Psoas muscle (tissue), 8 donors: ENCODE measurements at regions of chr4 and their contacts with region 1.

Region 1: GRCh38 chr4:184838249-184839074 is 12.7 kb upstream of the ACSL1 start:
- DNase-seq: no peak
- ATAC-seq: no peak
- H3K4me3 ChIP-seq: no peak overlapping the region
- H3K27ac ChIP-seq: no peak overlapping the region
- H3K4me1 ChIP-seq: no peaks in the 10 kb centered on the region
- H3K27me3 ChIP-seq: no peaks in the 10 kb centered on the region
- CTCF ChIP-seq: no peak

Region 2: GRCh38 chr4:184805462-184806228 is 32.8 kb before region 1 on chr4:
- intact Hi-C with region 1: no loop called
- DNase-seq: peak; percentile 88 to 97
- ATAC-seq: peak; percentile 81 to 89 (median 85)
- H3K4me3 ChIP-seq: peak overlapping the region; percentile 71
- H3K27ac ChIP-seq: peak overlapping the region; percentile 92
- H3K4me1 ChIP-seq: peaks cover 78% of the 10 kb centered on the region
- H3K27me3 ChIP-seq: no peaks in the 10 kb centered on the region
- CTCF ChIP-seq: no peak

Region 3: DNA sequence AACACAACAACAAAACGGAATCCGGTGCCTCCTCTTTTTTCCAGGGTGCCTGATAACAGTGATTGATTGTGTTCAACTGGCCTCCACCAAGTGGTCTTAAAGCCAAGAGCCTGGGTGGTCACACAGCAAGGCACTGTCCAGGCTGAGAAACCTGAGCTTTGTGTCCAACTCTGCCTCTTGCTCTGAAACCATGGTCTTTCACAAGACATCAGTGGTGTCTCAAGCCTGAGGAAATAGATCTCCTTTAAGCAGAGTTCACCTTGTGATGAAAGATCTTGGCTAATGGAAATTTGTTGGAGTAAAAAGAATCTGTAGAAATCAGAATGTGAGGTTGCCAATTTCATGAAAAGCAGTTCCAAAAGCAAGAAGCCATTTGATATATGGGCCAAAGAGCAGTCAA is 34.6 kb after region 1 on chr4:
- intact Hi-C with region 1: no loop called
- DNase-seq: no peak
- ATAC-seq: no peak
- H3K4me3 ChIP-seq: no peak overlapping the region
- H3K27ac ChIP-seq: no peak overlapping the region
- H3K4me1 ChIP-seq: no peaks in the 10 kb centered on the region
- H3K27me3 ChIP-seq: no peaks in the 10 kb centered on the region
- CTCF ChIP-seq: no peak

Region 4: GRCh38 chr4:184884883-184885282 is 46.4 kb after region 1 on chr4:
- intact Hi-C with region 1: no loop called
- DNase-seq: no peak
- ATAC-seq: no peak
- H3K4me3 ChIP-seq: no peak overlapping the region
- H3K27ac ChIP-seq: no peak overlapping the region
- H3K4me1 ChIP-seq: no peaks in the 10 kb centered on the region
- H3K27me3 ChIP-seq: no peaks in the 10 kb centered on the region
- CTCF ChIP-seq: no peak

Region 5: GRCh38 chr4:184955651-184956050 is 117.2 kb after region 1 on chr4:
- intact Hi-C with region 1: loop called in 1 of 2 experiments (anchors 10 kb)
- DNase-seq: no peak
- ATAC-seq: no peak
- H3K4me3 ChIP-seq: no peak overlapping the region
- H3K27ac ChIP-seq: no peak overlapping the region
- H3K4me1 ChIP-seq: peaks cover 8% of the 10 kb centered on the region
- H3K27me3 ChIP-seq: no peaks in the 10 kb centered on the region
- CTCF ChIP-seq: no peak

Region 6: GRCh38 chr4:185066179-185066578 is 227.7 kb after region 1 on chr4:
- intact Hi-C with region 1: no loop called
- DNase-seq: no peak
- ATAC-seq: no peak
- H3K4me3 ChIP-seq: no peak overlapping the region
- H3K27ac ChIP-seq: no peak overlapping the region
- H3K4me1 ChIP-seq: peaks cover 3% of the 10 kb centered on the region
- H3K27me3 ChIP-seq: peaks cover 0 to 3% (median 0%) of the 10 kb centered on the region in 3 donors
- CTCF ChIP-seq: no peak